ENCODE measurements at regions of chr13 and their contacts with region 1.

Region 1: GRCh38 chr13:71240911-71241310 is 626.1 kb downstream of the DACH1 start:
- DNase-seq: peak in 1 of 2 experiments; percentile 16
- H3K4me3 ChIP-seq: no peak overlapping the region
- H3K4me3 Mint-ChIP-seq: no peak overlapping the region
- H3K27ac Mint-ChIP-seq: no peak overlapping the region
- H3K4me1 ChIP-seq: no peaks in the 10 kb centered on the region
- H3K4me1 Mint-ChIP-seq: no peaks in the 10 kb centered on the region
- H3K27me3 ChIP-seq: no peaks in the 10 kb centered on the region
- H3K27me3 Mint-ChIP-seq: no peaks in the 10 kb centered on the region
- CTCF ChIP-seq: peak; percentile 40 to 57

Region 2: DNA sequence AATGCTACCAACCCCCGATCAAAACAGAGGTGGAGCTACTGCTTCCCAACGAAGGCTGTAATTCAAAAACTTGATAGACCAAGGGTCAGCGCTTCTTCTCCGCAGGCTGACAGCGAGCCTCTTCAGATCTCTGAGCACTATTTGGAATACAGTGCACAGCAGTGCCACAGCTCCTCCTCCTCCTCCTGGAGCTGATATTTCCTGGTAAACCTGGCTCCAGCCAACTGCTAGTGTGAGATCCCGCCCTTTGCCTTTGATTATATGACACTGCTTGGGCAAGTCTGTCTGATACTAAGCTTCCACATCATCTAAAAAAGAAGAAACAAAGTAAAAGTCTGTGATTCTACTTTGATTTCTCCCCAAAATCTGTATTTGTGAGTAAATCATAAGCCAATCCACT is 84.4 kb before region 1 on chr13:
- CTCF ChIA-PET with region 1: no interaction called
- POLR2A ChIA-PET with region 1: no interaction called
- intact Hi-C with region 1: no loop called
- DNase-seq: no peak
- H3K4me3 ChIP-seq: no peak overlapping the region
- H3K4me3 Mint-ChIP-seq: no peak overlapping the region
- H3K27ac Mint-ChIP-seq: no peak overlapping the region
- H3K4me1 ChIP-seq: no peaks in the 10 kb centered on the region
- H3K4me1 Mint-ChIP-seq: no peaks in the 10 kb centered on the region
- H3K27me3 ChIP-seq: no peaks in the 10 kb centered on the region
- H3K27me3 Mint-ChIP-seq: no peaks in the 10 kb centered on the region
- CTCF ChIP-seq: no peak

Region 3: DNA sequence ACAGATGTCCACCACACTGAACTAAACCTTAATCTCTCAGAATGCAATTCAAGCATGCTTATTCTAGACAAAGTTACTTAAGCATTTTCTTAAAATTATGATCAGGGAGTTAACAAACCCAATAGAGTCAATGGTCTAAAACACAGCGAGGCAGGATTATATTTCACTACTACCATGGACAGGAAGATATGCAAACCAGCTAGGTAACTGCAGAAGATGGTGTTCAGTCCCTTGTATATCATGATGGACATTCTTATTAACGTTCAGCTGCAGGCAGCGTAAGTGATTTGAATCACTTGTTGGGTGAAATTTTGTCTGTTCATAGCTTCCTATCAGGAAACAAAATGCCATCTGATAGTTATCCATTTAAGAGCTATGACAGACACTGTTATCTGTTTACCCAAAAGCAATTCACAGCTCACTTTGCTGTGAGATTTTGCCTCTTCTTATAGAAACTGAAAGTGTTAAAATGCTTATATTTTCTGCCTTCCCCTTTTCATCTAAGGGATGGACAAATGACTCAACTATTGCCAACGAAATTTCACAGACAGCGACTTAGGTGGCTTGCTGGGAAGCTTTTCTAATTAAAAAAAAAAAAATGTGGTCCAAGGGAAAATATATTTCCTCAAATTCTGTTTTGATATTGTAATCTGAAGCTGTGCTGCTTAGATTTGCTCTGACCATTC is 34.2 kb after region 1 on chr13:
- CTCF ChIA-PET with region 1: no interaction called
- POLR2A ChIA-PET with region 1: no interaction called
- intact Hi-C with region 1: no loop called
- DNase-seq: no peak
- H3K4me3 ChIP-seq: no peak overlapping the region
- H3K4me3 Mint-ChIP-seq: no peak overlapping the region
- H3K27ac Mint-ChIP-seq: no peak overlapping the region
- H3K4me1 ChIP-seq: no peaks in the 10 kb centered on the region
- H3K4me1 Mint-ChIP-seq: no peaks in the 10 kb centered on the region
- H3K27me3 ChIP-seq: no peaks in the 10 kb centered on the region
- H3K27me3 Mint-ChIP-seq: no peaks in the 10 kb centered on the region
- CTCF ChIP-seq: no peak

Region 4: GRCh38 chr13:71477735-71478134 is 236.8 kb after region 1 on chr13:
- CTCF ChIA-PET with region 1: no interaction called
- POLR2A ChIA-PET with region 1: no interaction called
- intact Hi-C with region 1: loop called (anchors 1 kb)
- DNase-seq: no peak
- H3K4me3 ChIP-seq: no peak overlapping the region
- H3K4me3 Mint-ChIP-seq: no peak overlapping the region
- H3K27ac Mint-ChIP-seq: no peak overlapping the region
- H3K4me1 ChIP-seq: no peaks in the 10 kb centered on the region
- H3K4me1 Mint-ChIP-seq: peaks cover 6% of the 10 kb centered on the region
- H3K27me3 ChIP-seq: no peaks in the 10 kb centered on the region
- H3K27me3 Mint-ChIP-seq: no peaks in the 10 kb centered on the region
- CTCF ChIP-seq: peak; percentile 35 to 50

Region 5: DNA sequence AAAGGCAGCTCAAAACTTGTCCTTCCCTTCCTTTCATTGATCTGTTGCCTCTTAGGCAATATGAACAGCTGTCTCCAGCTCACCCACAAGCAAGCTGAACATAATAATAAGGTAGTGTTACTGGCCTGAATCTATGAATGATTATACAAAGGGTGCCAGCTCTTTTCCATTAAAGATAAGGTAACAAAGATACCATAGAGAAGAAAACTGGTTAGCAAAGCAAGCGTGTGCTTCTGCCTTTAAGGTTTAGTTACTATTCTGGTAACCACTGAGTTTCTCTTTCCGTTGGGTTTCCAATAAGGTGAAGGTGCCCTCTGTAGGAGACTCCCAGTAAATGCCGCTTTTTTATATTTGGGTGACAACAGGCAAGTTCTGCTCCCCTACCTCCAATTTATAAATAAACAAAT is 638.2 kb after region 1 on chr13:
- CTCF ChIA-PET with region 1: no interaction called
- POLR2A ChIA-PET with region 1: no interaction called
- intact Hi-C with region 1: loop called (anchors 1 kb)
- DNase-seq: peak in 1 of 2 experiments; percentile 45
- H3K4me3 ChIP-seq: no peak overlapping the region
- H3K4me3 Mint-ChIP-seq: no peak overlapping the region
- H3K27ac Mint-ChIP-seq: no peak overlapping the region
- H3K4me1 ChIP-seq: no peaks in the 10 kb centered on the region
- H3K4me1 Mint-ChIP-seq: peaks cover 6% of the 10 kb centered on the region
- H3K27me3 ChIP-seq: no peaks in the 10 kb centered on the region
- H3K27me3 Mint-ChIP-seq: peaks cover 3% of the 10 kb centered on the region
- CTCF ChIP-seq: peak; percentile 55 to 65